Activated T-helper 1 cell treated with anti-CD3 and anti-CD28 coated beads, Interleukin-12 subunit alpha, Interleukin-12 subunit beta, Interleukin-2, Interleukin-4 antibody, amounts not matched to agents 30 ng/mL and 10 ng/mL and 1 ng/mL, durations not matched to agents 14 hours and 24 hours and 36 hours (primary cell): ENCODE measurements at regions of chr6 and their contacts with region 1.

Region 1: DNA sequence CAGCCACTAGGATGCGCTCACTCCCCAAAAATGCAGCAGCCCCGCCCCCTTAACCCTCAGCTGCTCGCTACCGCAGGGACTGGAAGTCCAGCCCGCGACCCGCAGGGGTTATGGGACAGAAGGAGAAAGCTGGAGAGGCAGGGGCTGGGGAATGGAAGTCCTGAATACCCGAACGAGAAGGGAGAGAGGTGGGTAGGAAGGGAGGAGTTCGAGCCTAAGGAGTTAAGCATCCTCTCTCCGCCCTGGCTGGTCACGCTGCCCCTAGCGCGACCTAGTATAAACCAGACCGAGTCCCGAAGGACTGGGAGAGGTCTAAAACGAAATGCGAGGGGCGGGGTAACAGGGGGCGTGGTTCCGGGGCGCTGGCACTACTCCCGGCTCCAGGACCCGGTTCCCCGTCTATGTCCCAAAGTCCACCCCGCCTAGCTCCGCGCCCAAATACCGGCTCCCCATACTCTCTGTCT is 448 bp upstream of the DDAH2 start:
- DNase-seq: peak; percentile 68
- H3K4me3 Mint-ChIP-seq: peak overlapping the region; percentile 95
- H3K27ac Mint-ChIP-seq: peak overlapping the region; percentile 74
- H3K4me1 Mint-ChIP-seq: peaks cover 54% of the 10 kb centered on the region
- H3K27me3 Mint-ChIP-seq: no peaks in the 10 kb centered on the region

Region 2: GRCh38 chr6:31769684-31770371 is 40.3 kb after region 1 on chr6:
- intact Hi-C with region 1: loop called (anchors 1 kb)
- DNase-seq: peak; percentile 79
- H3K4me3 Mint-ChIP-seq: no peak overlapping the region
- H3K27ac Mint-ChIP-seq: peak overlapping the region; percentile 3
- H3K4me1 Mint-ChIP-seq: peaks cover 27% of the 10 kb centered on the region
- H3K27me3 Mint-ChIP-seq: no peaks in the 10 kb centered on the region